ENCODE measurements at regions of chr6 and their contacts with region 1.

Region 1: DNA sequence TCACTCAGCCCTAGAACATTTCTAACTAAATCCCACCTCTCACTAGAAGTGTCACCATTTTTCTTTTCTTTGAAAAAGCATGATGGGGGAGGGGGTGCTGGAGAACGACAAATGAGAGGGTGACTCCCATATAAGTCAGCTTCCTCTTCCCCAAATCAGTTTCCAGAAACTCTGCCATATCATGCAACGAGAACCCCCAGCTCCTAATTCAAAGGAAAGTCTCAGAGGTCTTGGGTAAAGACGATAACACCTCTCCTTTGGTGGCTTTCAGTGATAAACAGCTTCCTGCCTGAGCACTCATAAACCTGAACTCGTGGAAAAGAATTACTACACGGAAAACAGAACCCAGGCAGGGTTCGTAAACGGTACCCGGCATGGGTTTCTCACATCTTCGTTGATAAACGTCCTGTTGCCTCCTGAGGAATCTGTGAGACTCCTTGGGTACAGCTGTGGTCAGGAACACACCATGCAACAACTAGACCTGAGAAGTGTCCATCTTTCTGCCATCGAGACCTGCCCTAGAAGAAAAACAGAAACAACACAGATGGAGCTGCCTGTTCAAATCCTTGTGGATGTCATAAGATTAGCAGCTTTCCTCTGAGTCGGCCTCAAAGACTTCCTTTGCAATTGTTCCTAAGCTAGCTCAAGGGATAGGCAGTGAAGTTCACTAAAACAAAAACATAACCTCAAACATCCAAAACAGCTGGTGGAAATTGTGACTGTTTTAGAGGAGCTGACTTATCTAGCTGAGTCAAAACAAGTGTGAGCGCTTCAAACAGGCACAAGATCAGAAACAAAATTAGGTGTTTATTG is 185.8 kb upstream of the PRDM1 start:
- DNase-seq: no peak
- ATAC-seq: peak in 7 of 8 donors; percentile 37 to 72 (median 62)
- H3K4me3 ChIP-seq: peak overlapping the region in 1 of 10 donors; percentile 3
- H3K27ac ChIP-seq: peak overlapping the region in 4 of 10 donors; percentile 27 to 54 (median 33)
- H3K4me1 ChIP-seq: peaks cover 0 to 24% (median 0%) of the 10 kb centered on the region in 9 donors
- H3K27me3 ChIP-seq: no peaks in the 10 kb centered on the region
- CTCF ChIP-seq: no peak

Region 2: DNA sequence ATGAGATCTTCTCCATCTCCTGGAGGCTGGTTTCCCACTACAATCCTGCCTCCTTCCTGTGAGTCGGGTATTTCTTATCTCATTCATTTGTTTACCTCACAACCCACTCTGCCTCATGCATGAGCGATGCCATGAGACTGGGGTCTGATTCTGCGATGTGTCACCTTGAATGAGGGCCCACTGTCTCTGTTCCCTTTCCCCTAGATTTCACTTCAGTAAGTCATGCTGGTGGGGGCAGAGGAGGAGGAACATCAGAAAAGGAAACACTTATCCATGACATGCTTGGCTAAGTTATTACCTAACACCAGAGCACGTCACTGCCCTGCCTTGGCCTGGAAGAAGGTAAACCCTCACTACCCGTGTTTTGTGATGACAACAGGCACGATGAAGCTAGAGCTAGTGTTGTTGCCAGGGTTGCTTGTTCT is 151.6 kb before region 1 on chr6:
- intact Hi-C with region 1: loop called in 1 of 10 experiments (anchors 10 kb)
- DNase-seq: no peak
- ATAC-seq: peak in 2 of 8 donors; percentile 33 to 63
- H3K4me3 ChIP-seq: no peak overlapping the region
- H3K27ac ChIP-seq: no peak overlapping the region
- H3K4me1 ChIP-seq: peaks cover 0 to 9% (median 4%) of the 10 kb centered on the region in 9 donors
- H3K27me3 ChIP-seq: peaks cover 0 to 3% (median 0%) of the 10 kb centered on the region in 7 donors
- CTCF ChIP-seq: no peak

Region 3: DNA sequence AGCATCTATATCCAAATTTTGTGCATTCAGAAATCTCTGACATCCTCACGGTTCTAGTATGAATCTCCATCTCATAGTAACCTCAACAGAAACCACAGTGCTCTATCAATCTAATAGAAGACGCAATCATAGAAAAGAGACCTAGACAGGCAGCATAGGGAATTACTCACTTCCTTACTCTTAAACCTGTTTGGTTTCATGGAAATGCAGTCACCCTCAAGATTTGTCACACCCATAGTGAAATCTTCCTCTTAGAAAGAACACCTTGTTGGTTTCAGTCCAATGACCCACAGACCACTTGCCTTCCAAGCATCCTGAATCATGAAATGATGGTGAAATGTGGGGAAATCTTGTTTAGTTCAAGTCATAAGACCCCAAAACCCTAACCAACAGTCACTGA is 19.7 kb after region 1 on chr6:
- intact Hi-C with region 1: no loop called
- DNase-seq: no peak
- ATAC-seq: no peak
- H3K4me3 ChIP-seq: no peak overlapping the region
- H3K27ac ChIP-seq: no peak overlapping the region
- H3K4me1 ChIP-seq: peaks cover 0 to 16% (median 3%) of the 10 kb centered on the region in 9 donors
- H3K27me3 ChIP-seq: no peaks in the 10 kb centered on the region
- CTCF ChIP-seq: no peak

Region 4: GRCh38 chr6:106005013-106005412 is 104.7 kb after region 1 on chr6:
- intact Hi-C with region 1: no loop called
- DNase-seq: no peak
- ATAC-seq: no peak
- H3K4me3 ChIP-seq: no peak overlapping the region
- H3K27ac ChIP-seq: no peak overlapping the region
- H3K4me1 ChIP-seq: no peaks in the 10 kb centered on the region
- H3K27me3 ChIP-seq: peaks cover 0 to 52% (median 36%) of the 10 kb centered on the region in 7 donors
- CTCF ChIP-seq: no peak